MCF 10A (cell line): ENCODE measurements at regions of chr15 and their contacts with region 1.

Region 1: DNA sequence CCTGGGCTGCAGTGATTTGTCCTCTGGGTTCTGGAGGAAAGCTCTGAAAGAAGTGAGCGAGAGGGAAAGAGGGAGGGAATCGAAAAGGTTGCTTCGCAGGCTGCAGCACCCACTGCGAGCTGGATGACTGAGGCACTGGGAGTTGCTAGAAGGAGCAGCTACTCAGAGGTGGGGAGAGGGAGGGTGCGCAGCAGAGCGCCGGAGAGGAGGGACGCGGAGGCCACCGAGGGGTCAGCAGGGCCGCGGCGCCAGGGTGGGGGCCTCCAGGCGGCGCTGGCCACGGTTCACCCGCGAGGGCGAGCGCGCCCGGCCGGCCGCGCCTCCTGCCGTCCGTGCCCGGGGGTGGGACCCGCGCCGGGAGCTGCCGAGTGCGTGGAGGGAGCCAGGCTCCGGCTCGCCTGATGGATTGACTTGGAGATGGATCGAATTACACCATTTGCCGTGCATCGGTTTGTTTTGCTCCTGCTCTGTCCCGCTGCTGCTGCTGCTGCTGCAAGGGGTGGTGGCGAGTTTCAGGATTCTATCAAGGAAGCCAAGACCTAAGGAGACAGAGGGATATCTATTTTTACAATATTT is at the start of gene SEMA6D:
- DNase-seq: peak; percentile 73
- H3K4me3 Mint-ChIP-seq: peak within 1 kb of the TSS; percentile 81
- H3K27ac Mint-ChIP-seq: peak within 1 kb of the TSS; percentile 25
- H3K4me1 Mint-ChIP-seq: peaks cover 5% of the 10 kb centered on the region
- H3K27me3 Mint-ChIP-seq: no peaks in the 10 kb centered on the region
- CTCF ChIP-seq: peak; percentile 40
- total RNA-seq, gene SEMA6D: 0.65 and 1.1 TPM in 2 replicates

Region 2: GRCh38 chr15:47384341-47384740 is 332.8 kb before region 1 on chr15:
- CTCF ChIA-PET with region 1: interaction called, 3 read pairs
- POLR2A ChIA-PET with region 1: no interaction called
- intact Hi-C with region 1: loop called (anchors 10 kb)
- DNase-seq: peak; percentile 78
- H3K4me3 Mint-ChIP-seq: no peak overlapping the region
- H3K27ac Mint-ChIP-seq: peak overlapping the region; percentile 54
- H3K4me1 Mint-ChIP-seq: peaks cover 27% of the 10 kb centered on the region
- H3K27me3 Mint-ChIP-seq: no peaks in the 10 kb centered on the region
- CTCF ChIP-seq: no peak

Region 3: DNA sequence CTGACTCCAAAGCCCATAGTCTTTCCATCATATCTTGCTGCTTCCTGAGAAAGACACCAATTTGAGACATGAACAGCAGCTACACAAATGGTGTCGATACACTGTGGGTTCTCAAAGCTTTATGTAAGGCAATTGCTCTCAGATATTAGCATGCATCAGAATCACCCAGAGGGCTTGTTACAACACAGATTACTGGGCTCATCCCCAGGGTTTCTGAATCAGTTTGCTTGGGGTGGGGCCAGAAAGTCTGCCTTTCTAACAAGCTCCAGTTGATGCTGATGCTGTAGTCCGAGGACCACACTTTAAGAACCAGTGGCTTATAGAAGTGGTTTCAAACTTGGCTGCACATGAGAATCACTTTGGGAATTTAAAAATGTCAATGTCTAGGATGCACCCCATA is 86.6 kb after region 1 on chr15:
- CTCF ChIA-PET with region 1: interaction called, 6 read pairs
- POLR2A ChIA-PET with region 1: interaction called, 11 read pairs
- intact Hi-C with region 1: no loop called
- DNase-seq: peak; percentile 67
- H3K4me3 Mint-ChIP-seq: no peak overlapping the region
- H3K27ac Mint-ChIP-seq: no peak overlapping the region
- H3K4me1 Mint-ChIP-seq: peaks cover 25% of the 10 kb centered on the region
- H3K27me3 Mint-ChIP-seq: no peaks in the 10 kb centered on the region
- CTCF ChIP-seq: no peak

Region 4: DNA sequence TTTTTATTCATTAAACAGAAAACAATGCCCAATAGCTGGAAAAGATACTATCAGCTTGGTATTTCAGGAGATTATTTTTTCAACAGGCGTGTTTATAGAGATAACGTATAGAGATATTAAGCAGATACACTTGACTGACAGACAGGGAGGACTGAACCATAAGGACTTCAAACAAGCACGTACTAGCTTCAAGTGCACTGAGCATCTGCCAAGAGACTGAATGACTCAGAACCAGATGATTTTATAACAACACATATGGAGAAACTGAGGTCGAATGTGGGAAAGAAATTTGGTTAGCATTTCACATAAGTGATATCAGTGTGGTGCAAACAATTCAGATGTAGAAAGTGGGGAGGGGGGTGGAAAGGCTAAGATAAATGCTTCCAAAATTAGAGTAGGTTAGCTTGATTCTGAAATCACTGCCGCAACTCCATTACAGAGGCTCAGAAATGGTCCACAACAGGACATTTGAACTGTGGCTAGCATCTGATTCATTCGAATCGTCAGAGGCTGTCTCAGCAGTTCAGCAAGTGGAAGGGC is 103.7 kb after region 1 on chr15:
- CTCF ChIA-PET with region 1: interaction called, 11 read pairs
- POLR2A ChIA-PET with region 1: interaction called, 16 read pairs
- intact Hi-C with region 1: loop called (anchors 1 kb)
- DNase-seq: peak; percentile 87
- H3K4me3 Mint-ChIP-seq: peak overlapping the region; percentile 57
- H3K27ac Mint-ChIP-seq: peak overlapping the region; percentile 53
- H3K4me1 Mint-ChIP-seq: peaks cover 27% of the 10 kb centered on the region
- H3K27me3 Mint-ChIP-seq: no peaks in the 10 kb centered on the region
- CTCF ChIP-seq: no peak

Region 5: GRCh38 chr15:48084759-48085590 is 367.9 kb after region 1 on chr15:
- CTCF ChIA-PET with region 1: interaction called, 5 read pairs
- POLR2A ChIA-PET with region 1: interaction called, 4 read pairs
- intact Hi-C with region 1: loop called (anchors 2 kb)
- DNase-seq: peak; percentile 49
- H3K4me3 Mint-ChIP-seq: no peak overlapping the region
- H3K27ac Mint-ChIP-seq: no peak overlapping the region
- H3K4me1 Mint-ChIP-seq: peaks cover 12% of the 10 kb centered on the region
- H3K27me3 Mint-ChIP-seq: no peaks in the 10 kb centered on the region
- CTCF ChIP-seq: peak; percentile 47